Calu3 (cell line): ENCODE measurements at regions of chr7 and their contacts with region 1.

Region 1: DNA sequence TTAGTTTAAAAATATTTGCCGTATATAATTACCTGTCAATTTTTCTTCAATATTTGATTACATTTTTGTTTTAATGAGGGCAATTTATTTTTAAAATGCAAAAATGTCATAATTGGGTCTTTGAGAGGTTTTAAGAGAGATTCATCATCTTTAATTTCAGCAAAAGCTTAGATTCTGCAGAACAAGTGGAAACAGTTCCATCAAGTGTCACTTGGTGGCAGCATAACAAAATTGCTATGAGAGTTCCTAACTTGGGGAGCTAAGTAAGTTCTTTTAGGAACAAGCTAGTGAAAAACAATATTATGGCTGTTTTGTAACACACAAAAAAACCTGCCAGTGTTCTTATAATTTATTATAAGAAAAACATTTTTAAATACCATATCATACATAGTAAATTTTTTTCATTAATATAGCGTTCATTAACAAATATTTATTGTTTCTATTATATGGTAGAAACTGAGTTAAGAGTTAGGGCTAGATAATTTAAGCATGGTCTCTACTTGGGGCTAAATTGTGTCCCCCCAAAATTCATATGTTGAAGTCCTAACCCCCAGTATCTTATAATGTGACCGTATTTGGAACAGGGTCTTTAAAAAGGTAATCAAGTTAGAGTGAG is 155.2 kb downstream of the MAGI2 start:
- DNase-seq: peak; percentile 24
- H3K4me3 Mint-ChIP-seq: no peak overlapping the region
- H3K27ac Mint-ChIP-seq: no peak overlapping the region
- H3K4me1 Mint-ChIP-seq: peaks cover 13% of the 10 kb centered on the region
- H3K27me3 Mint-ChIP-seq: no peaks in the 10 kb centered on the region
- CTCF ChIP-seq: no peak

Region 2: GRCh38 chr7:79504712-79505389 is 206.6 kb after region 1 on chr7:
- CTCF ChIA-PET with region 1: interaction called, 4 read pairs
- intact Hi-C with region 1: loop called (anchors 10 kb)
- DNase-seq: no peak
- H3K4me3 Mint-ChIP-seq: no peak overlapping the region
- H3K27ac Mint-ChIP-seq: no peak overlapping the region
- H3K4me1 Mint-ChIP-seq: no peaks in the 10 kb centered on the region
- H3K27me3 Mint-ChIP-seq: no peaks in the 10 kb centered on the region
- CTCF ChIP-seq: no peak

Region 3: DNA sequence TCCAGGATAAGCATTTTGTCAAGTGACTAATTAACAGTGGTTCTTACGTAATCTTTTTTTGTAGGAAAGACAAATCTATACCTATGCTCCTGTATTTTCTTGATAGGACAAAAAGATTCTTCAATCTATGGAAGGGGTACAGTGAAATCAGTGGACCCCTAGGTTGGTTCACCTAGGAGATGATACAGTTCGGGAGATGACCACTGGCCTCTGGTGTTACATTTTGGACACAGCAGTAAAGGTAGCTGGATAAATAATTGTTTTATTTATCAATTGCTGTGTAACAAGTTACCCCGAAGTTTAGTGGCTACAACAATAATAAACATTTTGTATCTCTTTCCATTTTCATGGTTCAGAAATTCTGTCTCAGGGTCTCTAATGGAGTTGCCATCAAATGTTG is 443.4 kb after region 1 on chr7:
- CTCF ChIA-PET with region 1: interaction called, 21 read pairs
- intact Hi-C with region 1: loop called (anchors 5 kb)
- DNase-seq: no peak
- H3K4me3 Mint-ChIP-seq: no peak overlapping the region
- H3K27ac Mint-ChIP-seq: no peak overlapping the region
- H3K4me1 Mint-ChIP-seq: no peaks in the 10 kb centered on the region
- H3K27me3 Mint-ChIP-seq: no peaks in the 10 kb centered on the region
- CTCF ChIP-seq: no peak

Region 4: GRCh38 chr7:80018941-80019752 is 720.9 kb after region 1 on chr7:
- CTCF ChIA-PET with region 1: no interaction called
- intact Hi-C with region 1: loop called (anchors 10 kb)
- DNase-seq: peak; percentile 33
- H3K4me3 Mint-ChIP-seq: no peak overlapping the region
- H3K27ac Mint-ChIP-seq: no peak overlapping the region
- H3K4me1 Mint-ChIP-seq: no peaks in the 10 kb centered on the region
- H3K27me3 Mint-ChIP-seq: no peaks in the 10 kb centered on the region
- CTCF ChIP-seq: peak; percentile 47

Region 5: GRCh38 chr7:80047856-80048459 is 749.7 kb after region 1 on chr7:
- CTCF ChIA-PET with region 1: no interaction called
- intact Hi-C with region 1: loop called (anchors 10 kb)
- DNase-seq: no peak
- H3K4me3 Mint-ChIP-seq: no peak overlapping the region
- H3K27ac Mint-ChIP-seq: no peak overlapping the region
- H3K4me1 Mint-ChIP-seq: no peaks in the 10 kb centered on the region
- H3K27me3 Mint-ChIP-seq: no peaks in the 10 kb centered on the region
- CTCF ChIP-seq: no peak